Vagina (tissue), 2 donors: ENCODE measurements at regions of chr19 and their contacts with region 1.

Region 1: GRCh38 chr19:36054119-36054732 is at the start of gene THAP8:
- DNase-seq: peak; percentile 99 to 100
- H3K4me3 ChIP-seq: peak within 1 kb of the TSS; percentile 54 to 63
- H3K27ac ChIP-seq: peak within 1 kb of the TSS; percentile 94
- H3K4me1 ChIP-seq: peaks cover 25% of the 10 kb centered on the region
- H3K27me3 ChIP-seq: no peaks in the 10 kb centered on the region
- CTCF ChIP-seq: peak in 1 of 3 experiments; percentile 45
- POLR2A ChIP-seq: peak in 1 of 2 donors; percentile 69
- total RNA-seq, gene THAP8: 12.0 TPM

Region 2: DNA sequence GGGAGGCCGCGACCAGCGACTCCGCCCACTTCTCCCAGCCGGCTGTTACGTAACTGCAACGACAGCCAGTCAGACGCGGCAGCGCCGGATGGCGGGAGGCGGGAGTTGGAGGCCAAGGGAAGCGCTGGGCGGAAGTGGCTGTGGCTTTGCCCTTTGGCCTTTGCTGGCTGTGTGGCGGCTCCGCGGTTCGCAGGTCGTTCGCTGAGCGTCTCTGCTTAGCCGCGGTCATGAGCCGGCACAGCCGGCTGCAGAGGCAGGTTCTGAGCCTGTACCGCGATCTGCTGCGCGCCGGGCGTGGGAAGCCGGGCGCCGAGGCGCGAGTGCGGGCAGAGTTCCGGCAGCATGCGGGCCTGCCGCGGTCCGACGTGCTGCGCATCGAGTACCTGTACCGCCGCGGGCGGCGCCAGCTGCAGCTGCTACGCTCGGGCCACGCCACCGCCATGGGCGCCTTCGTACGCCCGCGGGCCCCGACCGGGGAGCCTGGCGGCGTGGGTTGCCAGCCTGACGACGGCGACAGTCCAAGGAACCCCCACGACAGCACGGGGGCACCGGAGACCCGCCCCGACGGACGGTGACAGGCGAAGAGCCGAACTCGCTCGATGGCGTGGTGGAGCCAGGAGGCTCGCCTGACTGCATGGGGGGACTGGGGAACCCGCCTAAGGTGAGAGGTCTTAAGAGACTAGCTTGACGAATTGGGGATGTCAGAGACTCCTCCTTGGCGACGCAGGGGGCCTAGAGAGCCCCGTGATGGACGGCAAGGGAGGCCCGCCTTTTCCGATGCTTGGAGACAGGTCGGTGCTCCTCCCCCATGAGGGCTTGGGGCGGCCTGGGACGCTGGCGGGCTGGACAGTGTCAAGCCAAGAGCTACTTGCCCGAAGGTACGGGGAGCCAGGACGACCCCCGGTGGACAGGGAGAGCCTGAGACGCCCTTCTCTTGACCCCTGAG is 58.9 kb before region 1 on chr19 and contains the start of gene SDHAF1:
- intact Hi-C with region 1: loop called (anchors 5 kb)
- DNase-seq: peak in 1 of 2 donors; percentile 94
- H3K4me3 ChIP-seq: peak within 1 kb of the TSS; percentile 70 to 88
- H3K27ac ChIP-seq: peak within 1 kb of the TSS; percentile 83
- H3K4me1 ChIP-seq: peaks cover 51% of the 10 kb centered on the region
- H3K27me3 ChIP-seq: no peaks in the 10 kb centered on the region
- CTCF ChIP-seq: no peak
- POLR2A ChIP-seq: peak in 1 of 2 donors; percentile 55
- total RNA-seq, gene SDHAF1: 46.9 TPM

Region 3: GRCh38 chr19:36114763-36115452 is 60.7 kb after region 1 on chr19 and contains the start of gene POLR2I:
- intact Hi-C with region 1: loop called (anchors 10 kb)
- DNase-seq: peak; percentile 99 to 100
- H3K4me3 ChIP-seq: peak within 1 kb of the TSS; percentile 91 to 93
- H3K27ac ChIP-seq: peak within 1 kb of the TSS; percentile 87
- H3K4me1 ChIP-seq: peaks cover 34% of the 10 kb centered on the region
- H3K27me3 ChIP-seq: no peaks in the 10 kb centered on the region
- CTCF ChIP-seq: no peak
- POLR2A ChIP-seq: no peak
- total RNA-seq, gene POLR2I: 108 TPM

Region 4: GRCh38 chr19:36136964-36137686 is 82.9 kb after region 1 on chr19:
- intact Hi-C with region 1: no loop called
- DNase-seq: no peak
- H3K4me3 ChIP-seq: no peak overlapping the region
- H3K27ac ChIP-seq: peak overlapping the region; percentile 14
- H3K4me1 ChIP-seq: peaks cover 33% of the 10 kb centered on the region
- H3K27me3 ChIP-seq: no peaks in the 10 kb centered on the region
- CTCF ChIP-seq: no peak
- POLR2A ChIP-seq: no peak